Dorsolateral prefrontal cortex (tissue), 120 donors: ENCODE measurements at regions of chr5 and their contacts with region 1.

Region 1: GRCh38 chr5:129245489-129245888 is 150.9 kb downstream of the ISOC1 start:
- DNase-seq: no peak
- H3K4me3 ChIP-seq: peak overlapping the region in 3 of 59 donors; percentile 2 to 22 (median 16)
- H3K27ac ChIP-seq: peak overlapping the region; percentile 60 to 97 (median 91)
- H3K27me3 ChIP-seq: no peaks in the 10 kb centered on the region
- CTCF ChIP-seq: peak in 8 of 56 donors; percentile 6 to 30 (median 21)

Region 2: DNA sequence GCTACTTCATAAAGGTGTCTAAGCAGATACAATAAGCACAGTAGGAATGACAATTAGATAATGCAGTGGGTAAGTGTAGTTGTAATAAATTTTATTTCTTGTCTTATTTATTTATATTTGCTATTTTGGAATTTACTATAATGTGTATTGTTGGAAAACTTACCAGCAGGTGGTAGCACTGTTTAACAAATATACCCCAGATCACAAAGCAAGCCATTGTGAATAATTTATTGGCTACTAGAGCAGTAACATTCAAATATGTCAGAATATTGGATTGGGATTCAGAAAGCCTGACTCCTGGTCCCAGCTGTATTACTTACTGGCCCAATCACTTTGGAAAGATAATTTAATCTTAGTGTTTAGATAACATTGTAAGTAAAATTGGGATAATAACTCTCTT is 72.9 kb before region 1 on chr5:
- intact Hi-C with region 1: loop called in 1 of 2 experiments (anchors 5 kb)
- DNase-seq: no peak
- H3K4me3 ChIP-seq: no peak overlapping the region
- H3K27ac ChIP-seq: peak overlapping the region in 2 of 59 donors; percentile 21 to 30
- H3K27me3 ChIP-seq: no peaks in the 10 kb centered on the region
- CTCF ChIP-seq: peak; percentile 30 to 89 (median 64)

Region 3: DNA sequence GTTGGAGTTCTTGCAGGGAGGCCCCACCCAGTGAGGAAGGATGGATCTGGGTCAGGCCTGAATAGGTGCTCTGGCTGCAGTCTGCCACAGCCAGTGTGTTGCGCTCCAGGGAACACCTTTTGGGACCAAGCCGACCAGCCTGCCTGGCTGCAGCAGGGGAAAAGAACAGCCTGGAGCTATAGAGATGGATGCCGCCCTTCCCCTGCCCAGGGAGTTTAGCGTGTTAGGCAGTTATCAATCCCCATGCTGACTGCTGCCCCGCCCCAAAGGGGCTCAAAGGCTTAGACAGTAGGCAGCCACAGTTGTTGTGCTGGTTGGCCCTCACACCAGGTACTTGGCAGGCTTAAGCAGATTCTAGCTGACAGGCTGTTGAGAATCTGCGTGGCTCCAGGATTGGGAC is 61.2 kb after region 1 on chr5:
- intact Hi-C with region 1: no loop called
- DNase-seq: no peak
- H3K4me3 ChIP-seq: no peak overlapping the region
- H3K27ac ChIP-seq: no peak overlapping the region
- H3K27me3 ChIP-seq: no peaks in the 10 kb centered on the region
- CTCF ChIP-seq: no peak

Region 4: GRCh38 chr5:129412721-129413120 is 167.2 kb after region 1 on chr5:
- intact Hi-C with region 1: no loop called
- DNase-seq: no peak
- H3K4me3 ChIP-seq: no peak overlapping the region
- H3K27ac ChIP-seq: no peak overlapping the region
- H3K27me3 ChIP-seq: no peaks in the 10 kb centered on the region
- CTCF ChIP-seq: no peak

Region 5: DNA sequence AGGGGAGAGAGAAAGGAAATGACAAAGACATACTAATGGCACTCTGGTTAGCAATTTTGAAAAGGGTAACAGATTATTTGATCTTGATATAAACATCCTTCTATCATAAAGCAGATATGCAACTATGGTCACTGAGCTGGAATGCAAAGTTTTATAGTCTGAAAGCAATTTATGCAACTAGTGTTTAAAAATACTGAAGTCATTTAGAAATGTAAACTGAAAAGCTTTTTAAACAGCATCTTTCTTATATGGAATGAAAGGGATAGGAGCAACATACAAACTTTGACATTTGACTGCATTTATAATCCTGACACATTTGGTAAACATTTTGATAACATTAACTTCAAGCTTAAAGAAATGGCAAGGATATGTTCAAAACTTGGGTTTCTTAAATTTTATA is 185.9 kb after region 1 on chr5:
- intact Hi-C with region 1: no loop called
- DNase-seq: no peak
- H3K4me3 ChIP-seq: no peak overlapping the region
- H3K27ac ChIP-seq: no peak overlapping the region
- H3K27me3 ChIP-seq: no peaks in the 10 kb centered on the region
- CTCF ChIP-seq: no peak